IMR-90 (cell line): ENCODE measurements at regions of chr6 and their contacts with region 1.

Region 1: GRCh38 chr6:68941345-68941744 is 306.3 kb downstream of the ADGRB3 start:
- DNase-seq: no peak
- ATAC-seq: no peak
- H3K4me3 ChIP-seq: no peak overlapping the region
- H3K27ac ChIP-seq: no peak overlapping the region
- H3K4me1 ChIP-seq: no peaks in the 10 kb centered on the region
- H3K27me3 ChIP-seq: no peaks in the 10 kb centered on the region
- CTCF ChIP-seq: no peak
- POLR2A ChIP-seq: no peak
- RAD21 ChIP-seq: no peak

Region 2: GRCh38 chr6:67640484-67640883 is 1300.9 kb before region 1 on chr6:
- CTCF ChIA-PET with region 1: no interaction called
- POLR2A ChIA-PET with region 1: no interaction called
- dilution Hi-C with region 1: no loop called
- in situ Hi-C with region 1: no loop called
- intact Hi-C with region 1: loop called (anchors 10 kb)
- DNase-seq: peak; percentile 4
- ATAC-seq: no peak
- H3K4me3 ChIP-seq: no peak overlapping the region
- H3K27ac ChIP-seq: no peak overlapping the region
- H3K4me1 ChIP-seq: no peaks in the 10 kb centered on the region
- H3K27me3 ChIP-seq: no peaks in the 10 kb centered on the region
- CTCF ChIP-seq: no peak
- POLR2A ChIP-seq: no peak
- RAD21 ChIP-seq: no peak

Region 3: DNA sequence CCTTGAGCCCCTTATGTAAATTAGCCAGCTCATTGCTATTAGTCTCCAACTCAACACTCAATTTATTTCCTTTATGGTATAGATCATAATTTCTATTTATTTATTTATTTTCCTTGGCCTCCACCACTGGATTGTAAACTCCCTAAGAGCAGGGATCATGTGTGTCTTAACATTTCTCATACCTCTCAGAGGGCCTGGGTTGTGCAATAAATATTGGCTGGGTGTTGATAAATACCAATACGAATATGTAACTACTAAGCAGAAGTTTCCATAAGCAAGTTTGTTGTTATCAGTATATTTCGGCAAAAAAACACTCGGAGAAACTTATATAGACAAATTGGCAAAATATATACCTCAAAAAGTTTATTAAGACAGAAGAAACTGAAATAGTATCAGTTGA is 48.9 kb before region 1 on chr6:
- CTCF ChIA-PET with region 1: no interaction called
- POLR2A ChIA-PET with region 1: no interaction called
- dilution Hi-C with region 1: no loop called
- in situ Hi-C with region 1: no loop called
- intact Hi-C with region 1: no loop called
- DNase-seq: no peak
- ATAC-seq: no peak
- H3K4me3 ChIP-seq: no peak overlapping the region
- H3K27ac ChIP-seq: no peak overlapping the region
- H3K4me1 ChIP-seq: no peaks in the 10 kb centered on the region
- H3K27me3 ChIP-seq: no peaks in the 10 kb centered on the region
- CTCF ChIP-seq: no peak
- POLR2A ChIP-seq: no peak
- RAD21 ChIP-seq: no peak